CD8-positive, alpha-beta T cell (primary cell): ENCODE measurements at regions of chr9 and their contacts with region 1.

Region 1: DNA sequence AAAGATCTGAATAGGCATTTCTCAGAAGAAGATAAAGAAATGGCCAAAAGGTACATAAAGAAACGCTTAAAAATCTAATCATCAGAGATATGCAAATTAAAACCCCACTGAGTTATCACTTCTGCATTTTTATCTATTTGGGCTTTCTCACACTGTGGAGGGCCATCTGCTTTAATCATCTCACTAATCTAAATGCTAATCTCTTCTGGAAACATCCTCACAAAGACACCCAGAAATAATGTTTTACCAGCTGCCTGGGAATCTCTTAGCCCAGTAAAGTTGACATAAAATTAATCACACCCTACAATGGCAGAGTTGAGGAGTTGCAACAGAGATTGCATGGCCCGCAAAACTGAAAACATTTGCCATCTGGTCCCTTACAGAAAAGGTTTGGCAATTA is 407.9 kb upstream of the CYLC2 start:
- DNase-seq: no peak
- ATAC-seq: no peak
- H3K4me3 ChIP-seq: no peak overlapping the region
- H3K4me3 Mint-ChIP-seq: no peak overlapping the region
- H3K27ac ChIP-seq: no peak overlapping the region
- H3K27ac Mint-ChIP-seq: no peak overlapping the region
- H3K4me1 ChIP-seq: no peaks in the 10 kb centered on the region
- H3K4me1 Mint-ChIP-seq: no peaks in the 10 kb centered on the region
- H3K27me3 ChIP-seq: no peaks in the 10 kb centered on the region
- H3K27me3 Mint-ChIP-seq: no peaks in the 10 kb centered on the region
- CTCF ChIP-seq: no peak

Region 2: GRCh38 chr9:101951598-101951997 is 635.7 kb before region 1 on chr9:
- CTCF ChIA-PET with region 1: no interaction called
- POLR2A ChIA-PET with region 1: no interaction called
- intact Hi-C with region 1: no loop called
- DNase-seq: no peak
- ATAC-seq: no peak
- H3K4me3 ChIP-seq: no peak overlapping the region
- H3K4me3 Mint-ChIP-seq: no peak overlapping the region
- H3K27ac ChIP-seq: no peak overlapping the region
- H3K27ac Mint-ChIP-seq: no peak overlapping the region
- H3K4me1 ChIP-seq: no peaks in the 10 kb centered on the region
- H3K4me1 Mint-ChIP-seq: no peaks in the 10 kb centered on the region
- H3K27me3 ChIP-seq: no peaks in the 10 kb centered on the region
- H3K27me3 Mint-ChIP-seq: no peaks in the 10 kb centered on the region
- CTCF ChIP-seq: no peak

Region 3: DNA sequence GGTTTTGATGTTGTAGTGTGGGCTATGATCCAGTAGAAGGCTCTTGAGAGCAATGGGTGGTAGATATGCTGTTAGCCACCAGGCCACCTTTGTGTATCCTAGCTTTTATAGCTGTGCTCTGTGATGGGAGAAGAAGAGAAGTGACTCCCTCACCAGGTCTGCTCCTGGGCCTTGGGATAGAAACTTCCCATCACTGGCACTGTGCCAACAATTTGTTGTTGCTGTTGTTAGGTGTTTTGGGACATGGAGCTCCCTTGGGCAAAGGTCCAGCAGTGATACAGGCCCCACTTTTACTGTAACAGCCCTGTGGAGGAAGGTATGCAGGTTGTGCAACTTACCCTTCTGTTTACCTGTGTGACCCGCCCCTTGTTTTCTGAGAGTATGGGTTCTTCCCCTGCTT is 277.9 kb before region 1 on chr9:
- CTCF ChIA-PET with region 1: no interaction called
- POLR2A ChIA-PET with region 1: no interaction called
- intact Hi-C with region 1: no loop called
- DNase-seq: no peak
- ATAC-seq: no peak
- H3K4me3 ChIP-seq: no peak overlapping the region
- H3K4me3 Mint-ChIP-seq: no peak overlapping the region
- H3K27ac ChIP-seq: no peak overlapping the region
- H3K27ac Mint-ChIP-seq: no peak overlapping the region
- H3K4me1 ChIP-seq: no peaks in the 10 kb centered on the region
- H3K4me1 Mint-ChIP-seq: no peaks in the 10 kb centered on the region
- H3K27me3 ChIP-seq: no peaks in the 10 kb centered on the region
- H3K27me3 Mint-ChIP-seq: no peaks in the 10 kb centered on the region
- CTCF ChIP-seq: no peak

Region 4: DNA sequence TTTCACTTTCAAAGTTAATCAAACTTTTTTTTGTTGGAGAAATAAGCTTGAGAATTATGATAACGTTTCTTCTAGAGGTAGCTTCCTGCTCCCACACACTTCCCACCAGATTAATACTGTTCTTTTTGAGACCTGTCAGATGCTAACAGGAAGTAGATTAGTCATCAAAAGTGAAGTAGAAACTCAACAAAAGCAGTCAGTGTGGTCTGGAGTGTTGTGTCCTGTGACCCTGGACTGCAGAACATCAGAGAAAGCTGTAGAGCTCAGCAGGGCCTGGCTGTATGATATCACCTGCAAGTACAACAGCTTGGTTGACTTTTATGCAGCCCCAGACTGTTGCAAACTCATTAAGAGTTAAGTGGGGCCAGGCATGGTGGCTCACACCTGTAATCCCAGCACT is 87.8 kb before region 1 on chr9:
- CTCF ChIA-PET with region 1: no interaction called
- POLR2A ChIA-PET with region 1: no interaction called
- intact Hi-C with region 1: no loop called
- DNase-seq: peak in 1 of 9 experiments; percentile 1
- ATAC-seq: no peak
- H3K4me3 ChIP-seq: no peak overlapping the region
- H3K4me3 Mint-ChIP-seq: no peak overlapping the region
- H3K27ac ChIP-seq: no peak overlapping the region
- H3K27ac Mint-ChIP-seq: no peak overlapping the region
- H3K4me1 ChIP-seq: no peaks in the 10 kb centered on the region
- H3K4me1 Mint-ChIP-seq: no peaks in the 10 kb centered on the region
- H3K27me3 ChIP-seq: no peaks in the 10 kb centered on the region
- H3K27me3 Mint-ChIP-seq: no peaks in the 10 kb centered on the region
- CTCF ChIP-seq: no peak

Region 5: DNA sequence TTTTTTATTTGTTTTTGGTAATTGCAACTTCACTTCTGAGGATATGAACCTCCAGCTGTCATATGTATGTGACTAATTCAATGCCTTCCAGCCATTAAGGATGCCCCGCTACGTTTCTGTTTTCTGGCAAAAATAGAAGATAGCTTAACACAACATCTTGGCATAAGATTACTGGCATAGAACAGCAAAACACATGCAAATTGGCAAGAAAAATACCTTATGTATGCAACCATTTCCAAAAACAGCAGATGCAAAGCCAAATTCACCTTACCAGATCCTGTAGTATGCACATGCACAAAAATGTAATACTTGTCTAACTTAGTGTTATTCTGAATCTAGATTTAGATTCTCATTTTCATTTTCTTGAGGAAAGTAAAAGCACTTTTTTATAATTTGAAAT is 53.2 kb before region 1 on chr9:
- CTCF ChIA-PET with region 1: no interaction called
- POLR2A ChIA-PET with region 1: no interaction called
- intact Hi-C with region 1: loop called in 1 of 2 experiments (anchors 5 kb)
- DNase-seq: no peak
- ATAC-seq: no peak
- H3K4me3 ChIP-seq: no peak overlapping the region
- H3K4me3 Mint-ChIP-seq: no peak overlapping the region
- H3K27ac ChIP-seq: no peak overlapping the region
- H3K27ac Mint-ChIP-seq: no peak overlapping the region
- H3K4me1 ChIP-seq: no peaks in the 10 kb centered on the region
- H3K4me1 Mint-ChIP-seq: no peaks in the 10 kb centered on the region
- H3K27me3 ChIP-seq: no peaks in the 10 kb centered on the region
- H3K27me3 Mint-ChIP-seq: no peaks in the 10 kb centered on the region
- CTCF ChIP-seq: no peak